ENCODE measurements at regions of chr2 and their contacts with region 1.

Region 1: DNA sequence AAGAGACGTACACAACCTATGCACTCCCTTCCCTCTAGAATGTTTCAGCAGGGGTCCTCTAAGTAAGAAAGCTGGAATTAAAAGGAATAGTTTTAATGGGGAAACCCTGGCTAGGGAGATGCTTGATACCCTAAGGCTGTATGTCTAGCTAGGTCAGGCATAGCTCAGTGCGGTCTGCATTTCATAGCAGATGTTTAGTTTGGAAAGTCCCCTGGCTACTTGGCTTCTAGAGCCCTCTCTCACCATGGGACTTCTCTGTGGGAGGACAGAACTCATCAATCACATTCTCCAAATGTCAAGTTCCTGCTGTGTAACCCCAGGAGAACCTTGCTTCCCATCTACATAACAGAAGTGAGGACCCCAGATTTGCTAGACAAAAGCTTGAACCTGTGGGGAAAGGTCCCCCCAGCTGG is 24.1 kb upstream of the ANXA4 start:
- DNase-seq: no peak
- H3K4me3 ChIP-seq: no peak overlapping the region
- H3K27ac ChIP-seq: no peak overlapping the region
- H3K4me1 ChIP-seq: no peaks in the 10 kb centered on the region
- H3K27me3 ChIP-seq: no peaks in the 10 kb centered on the region
- CTCF ChIP-seq: no peak
- POLR2A ChIP-seq: no peak

Region 2: DNA sequence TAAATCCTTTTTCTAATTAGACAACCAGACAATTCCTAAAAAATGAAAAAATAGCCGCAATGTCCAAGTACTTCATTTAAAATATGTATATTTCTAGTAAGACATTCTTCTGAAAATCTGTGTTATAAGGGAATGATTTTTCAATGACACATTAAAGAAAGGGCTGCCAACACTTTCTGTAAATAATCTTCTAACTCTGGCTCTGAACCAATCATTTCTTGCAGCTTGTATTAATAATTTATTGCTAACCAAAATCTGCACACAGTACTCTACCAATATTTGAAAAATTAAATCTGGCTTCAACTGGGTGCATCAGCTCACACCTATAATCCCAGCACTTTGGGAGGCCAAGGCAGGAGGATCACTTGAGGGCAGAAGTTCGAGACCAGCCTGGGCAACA is 288.9 kb before region 1 on chr2:
- intact Hi-C with region 1: no loop called
- DNase-seq: no peak
- H3K4me3 ChIP-seq: no peak overlapping the region
- H3K27ac ChIP-seq: no peak overlapping the region
- H3K4me1 ChIP-seq: peaks cover 0 to 10% of the 10 kb centered on the region in 2 donors
- H3K27me3 ChIP-seq: no peaks in the 10 kb centered on the region
- CTCF ChIP-seq: no peak
- POLR2A ChIP-seq: no peak

Region 3: GRCh38 chr2:69559442-69560146 is 158.3 kb before region 1 on chr2:
- intact Hi-C with region 1: loop called (anchors 5 kb)
- DNase-seq: peak in 6 of 7 donors; percentile 34 to 64 (median 50)
- H3K4me3 ChIP-seq: no peak overlapping the region
- H3K27ac ChIP-seq: no peak overlapping the region
- H3K4me1 ChIP-seq: peaks cover 0 to 12% of the 10 kb centered on the region in 2 donors
- H3K27me3 ChIP-seq: no peaks in the 10 kb centered on the region
- CTCF ChIP-seq: peak; percentile 50 to 89 (median 80)
- POLR2A ChIP-seq: no peak

Region 4: GRCh38 chr2:69643602-69644505 is 74.0 kb before region 1 on chr2 and contains the start of gene AAK1:
- intact Hi-C with region 1: loop called in 1 of 2 experiments (anchors 10 kb)
- DNase-seq: peak; percentile 86 to 92 (median 90)
- H3K4me3 ChIP-seq: peak within 1 kb of the TSS; percentile 71 to 90 (median 86)
- H3K27ac ChIP-seq: peak within 1 kb of the TSS; percentile 83 to 98 (median 95)
- H3K4me1 ChIP-seq: peaks cover 12 to 46% of the 10 kb centered on the region in 2 donors
- H3K27me3 ChIP-seq: no peaks in the 10 kb centered on the region
- CTCF ChIP-seq: peak in 1 of 6 experiments; percentile 3
- POLR2A ChIP-seq: peak; percentile 72 to 88
- total RNA-seq, gene AAK1: 44.1 to 106 (median 79.6) TPM

Region 5: GRCh38 chr2:69652221-69652651 is 65.6 kb before region 1 on chr2:
- intact Hi-C with region 1: loop called (anchors 10 kb)
- DNase-seq: no peak
- H3K4me3 ChIP-seq: no peak overlapping the region
- H3K27ac ChIP-seq: no peak overlapping the region
- H3K4me1 ChIP-seq: no peaks in the 10 kb centered on the region
- H3K27me3 ChIP-seq: no peaks in the 10 kb centered on the region
- CTCF ChIP-seq: no peak
- POLR2A ChIP-seq: no peak